SK-N-SH (cell line): ENCODE measurements at regions of chr16 and their contacts with region 1.

Region 1: DNA sequence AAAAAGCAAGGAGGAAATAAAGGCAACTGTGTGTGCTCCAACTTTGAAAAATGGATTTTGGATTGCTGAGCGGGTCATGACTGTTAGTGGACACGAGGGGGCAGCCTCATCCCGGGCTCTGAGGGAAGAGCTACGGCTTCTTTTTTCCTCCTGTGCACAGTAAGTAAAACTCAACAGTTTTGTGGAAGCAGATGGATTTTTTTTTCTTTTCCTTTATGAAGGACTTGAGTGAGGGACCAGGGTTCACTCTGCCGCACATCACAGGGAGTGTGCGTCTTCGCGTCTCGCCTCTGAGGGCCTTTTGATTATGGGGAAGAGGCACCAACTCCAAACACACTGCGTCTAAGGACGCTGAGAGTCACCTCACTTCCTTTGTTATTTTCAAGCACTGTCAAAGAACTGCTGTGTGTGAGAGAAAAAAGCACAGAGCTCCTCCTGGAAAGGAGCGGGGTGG is 80.3 kb upstream of the GOT2 start:
- DNase-seq: peak; percentile 70
- H3K4me3 ChIP-seq: peak overlapping the region; percentile 24 to 37; a peak in 2 of 4 replicates
- H3K27ac ChIP-seq: no peak overlapping the region
- H3K4me1 ChIP-seq: no peaks in the 10 kb centered on the region
- H3K27me3 ChIP-seq: no peaks in the 10 kb centered on the region
- CTCF ChIP-seq: peak; percentile 91
- EP300 ChIP-seq: no peak
- RAD21 ChIP-seq: peak; percentile 92

Region 2: GRCh38 chr16:58699151-58699550 is 115.2 kb before region 1 on chr16:
- CTCF ChIA-PET with region 1: no interaction called
- POLR2A ChIA-PET with region 1: no interaction called
- DNase-seq: no peak
- H3K4me3 ChIP-seq: no peak overlapping the region
- H3K27ac ChIP-seq: no peak overlapping the region
- H3K4me1 ChIP-seq: no peaks in the 10 kb centered on the region
- H3K27me3 ChIP-seq: no peaks in the 10 kb centered on the region
- CTCF ChIP-seq: no peak
- EP300 ChIP-seq: no peak
- RAD21 ChIP-seq: no peak

Region 3: DNA sequence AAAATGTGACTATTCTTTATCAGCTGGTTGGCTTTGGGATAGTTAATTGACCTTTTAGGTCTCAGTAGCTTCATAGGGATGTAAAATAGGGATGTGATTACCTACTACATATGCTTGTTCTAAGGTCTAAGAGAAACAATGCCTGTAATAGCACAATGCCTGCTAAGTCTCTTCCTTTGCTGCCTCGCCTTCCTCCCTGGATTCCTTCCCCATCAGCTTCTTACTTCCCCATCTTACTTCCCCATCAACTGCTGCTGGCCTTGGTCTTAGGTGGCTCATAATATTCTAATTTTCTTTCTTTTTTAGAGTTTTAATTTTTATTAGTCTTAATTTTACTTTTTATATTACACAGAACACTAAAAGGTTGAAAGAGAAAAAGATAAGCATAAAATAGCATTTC is 21.0 kb before region 1 on chr16:
- CTCF ChIA-PET with region 1: interaction called, 11 read pairs
- POLR2A ChIA-PET with region 1: no interaction called
- DNase-seq: no peak
- H3K4me3 ChIP-seq: no peak overlapping the region
- H3K27ac ChIP-seq: no peak overlapping the region
- H3K4me1 ChIP-seq: no peaks in the 10 kb centered on the region
- H3K27me3 ChIP-seq: no peaks in the 10 kb centered on the region
- CTCF ChIP-seq: no peak
- EP300 ChIP-seq: no peak
- RAD21 ChIP-seq: no peak

Region 4: DNA sequence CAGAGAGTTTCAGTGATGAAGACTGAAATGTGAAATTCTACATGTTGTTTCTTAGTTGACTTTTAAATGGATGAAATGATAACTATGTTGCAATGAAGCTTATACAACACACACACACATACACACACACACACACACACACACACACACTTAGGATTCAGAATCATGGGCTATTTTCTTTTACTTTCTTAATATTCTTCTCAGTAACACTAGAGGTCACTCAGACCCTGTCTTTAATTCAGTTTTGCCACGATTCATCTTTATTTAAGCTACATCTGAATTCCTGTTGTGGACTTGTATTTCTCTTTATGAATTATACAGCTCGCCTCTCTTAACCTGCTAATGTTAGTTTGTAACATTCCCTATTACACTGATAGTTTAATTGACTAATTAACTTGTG is 29.3 kb after region 1 on chr16:
- CTCF ChIA-PET with region 1: interaction called, 15 read pairs
- POLR2A ChIA-PET with region 1: no interaction called
- DNase-seq: peak; percentile 42
- H3K4me3 ChIP-seq: no peak overlapping the region
- H3K27ac ChIP-seq: no peak overlapping the region
- H3K4me1 ChIP-seq: no peaks in the 10 kb centered on the region
- H3K27me3 ChIP-seq: no peaks in the 10 kb centered on the region
- CTCF ChIP-seq: peak; percentile 40
- EP300 ChIP-seq: no peak
- RAD21 ChIP-seq: peak; percentile 61

Region 5: DNA sequence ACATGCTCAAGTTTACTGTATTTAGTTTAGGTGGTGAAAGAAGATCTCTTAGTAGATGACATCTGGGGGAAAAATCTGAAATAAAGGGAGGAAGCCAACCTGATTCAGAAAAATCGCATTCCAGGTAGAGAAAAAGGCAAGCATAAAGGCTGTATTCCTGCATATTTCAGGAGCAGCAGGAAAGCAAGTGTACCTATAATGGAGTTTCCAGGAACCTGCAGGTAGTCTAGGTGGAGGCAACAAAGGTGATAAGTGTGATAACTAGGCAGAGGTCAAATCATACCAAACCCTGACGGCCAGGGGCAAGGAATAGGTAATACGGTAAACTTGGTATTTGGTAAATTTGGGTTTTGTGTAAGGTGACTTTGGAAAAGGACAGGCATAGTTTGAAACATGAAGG is 52.6 kb after region 1 on chr16:
- CTCF ChIA-PET with region 1: no interaction called
- POLR2A ChIA-PET with region 1: no interaction called
- DNase-seq: no peak
- H3K4me3 ChIP-seq: no peak overlapping the region
- H3K27ac ChIP-seq: no peak overlapping the region
- H3K4me1 ChIP-seq: peaks cover 0 to 3% of the 10 kb centered on the region in 2 experiments; a peak in 1 of 4 replicates
- H3K27me3 ChIP-seq: no peaks in the 10 kb centered on the region
- CTCF ChIP-seq: no peak
- EP300 ChIP-seq: no peak
- RAD21 ChIP-seq: no peak

Region 6: DNA sequence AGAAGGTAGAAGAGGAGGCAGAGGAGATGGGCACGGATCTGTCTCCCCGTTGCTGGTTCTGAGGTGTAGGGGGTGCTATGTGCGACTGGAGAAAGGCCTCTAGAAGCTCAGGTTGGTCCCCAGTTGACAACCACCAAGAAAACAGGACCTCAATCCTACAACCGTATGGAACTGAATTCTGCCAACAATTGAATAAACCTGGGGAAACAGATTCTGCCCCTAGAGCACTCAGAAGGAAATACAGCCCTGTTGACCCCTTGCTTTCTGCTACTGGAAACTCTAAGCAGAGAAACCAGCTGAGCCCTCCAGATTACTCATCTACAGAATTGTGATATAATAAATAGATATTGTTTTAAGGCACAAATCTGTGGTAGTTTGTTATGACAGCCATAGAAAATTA is 232.7 kb after region 1 on chr16:
- CTCF ChIA-PET with region 1: interaction called, 10 read pairs
- POLR2A ChIA-PET with region 1: no interaction called
- DNase-seq: peak; percentile 2
- H3K4me3 ChIP-seq: no peak overlapping the region
- H3K27ac ChIP-seq: no peak overlapping the region
- H3K4me1 ChIP-seq: no peaks in the 10 kb centered on the region
- H3K27me3 ChIP-seq: no peaks in the 10 kb centered on the region
- CTCF ChIP-seq: peak; percentile 15; the same call in 1 of the 2 replicates
- EP300 ChIP-seq: no peak
- RAD21 ChIP-seq: no peak